Natural killer cell (primary cell): ENCODE measurements at regions of chr12 and their contacts with region 1.

Region 1: GRCh38 chr12:30695199-30696103 is at the start of gene IPO8:
- DNase-seq: peak; percentile 72 to 91
- ATAC-seq: peak; percentile 93 to 94 (median 93)
- H3K4me3 ChIP-seq: peak within 1 kb of the TSS; percentile 98
- H3K4me3 Mint-ChIP-seq: peak within 1 kb of the TSS; percentile 93
- H3K27ac ChIP-seq: peak within 1 kb of the TSS; percentile 70
- H3K27ac Mint-ChIP-seq: peak within 1 kb of the TSS; percentile 85 to 94
- H3K4me1 ChIP-seq: peaks cover 19% of the 10 kb centered on the region
- H3K4me1 Mint-ChIP-seq: peaks cover 33 to 38% of the 10 kb centered on the region in 2 donors
- H3K27me3 ChIP-seq: no peaks in the 10 kb centered on the region
- H3K27me3 Mint-ChIP-seq: peaks cover 0 to 2% of the 10 kb centered on the region in 2 donors
- CTCF ChIP-seq: peak; percentile 39
- total RNA-seq, gene IPO8: 42.6 to 54.8 (median 49.2) TPM

Region 2: GRCh38 chr12:29380536-29381523 is 1314.6 kb before region 1 on chr12 and contains the start of gene ERGIC2:
- intact Hi-C with region 1: loop called (anchors 1 kb)
- DNase-seq: peak; percentile 82 to 99
- ATAC-seq: peak; percentile 95 to 97 (median 95)
- H3K4me3 ChIP-seq: peak within 1 kb of the TSS; percentile 98
- H3K4me3 Mint-ChIP-seq: peak within 1 kb of the TSS; percentile 91
- H3K27ac ChIP-seq: peak within 1 kb of the TSS; percentile 97
- H3K27ac Mint-ChIP-seq: peak within 1 kb of the TSS; percentile 92 to 97
- H3K4me1 ChIP-seq: peaks cover 3% of the 10 kb centered on the region
- H3K4me1 Mint-ChIP-seq: peaks cover 36 to 39% of the 10 kb centered on the region in 2 donors
- H3K27me3 ChIP-seq: no peaks in the 10 kb centered on the region
- H3K27me3 Mint-ChIP-seq: peaks cover 3 to 20% of the 10 kb centered on the region in 2 donors
- CTCF ChIP-seq: no peak
- total RNA-seq, gene ERGIC2: 28.7 to 46.9 (median 37.2) TPM

Region 3: DNA sequence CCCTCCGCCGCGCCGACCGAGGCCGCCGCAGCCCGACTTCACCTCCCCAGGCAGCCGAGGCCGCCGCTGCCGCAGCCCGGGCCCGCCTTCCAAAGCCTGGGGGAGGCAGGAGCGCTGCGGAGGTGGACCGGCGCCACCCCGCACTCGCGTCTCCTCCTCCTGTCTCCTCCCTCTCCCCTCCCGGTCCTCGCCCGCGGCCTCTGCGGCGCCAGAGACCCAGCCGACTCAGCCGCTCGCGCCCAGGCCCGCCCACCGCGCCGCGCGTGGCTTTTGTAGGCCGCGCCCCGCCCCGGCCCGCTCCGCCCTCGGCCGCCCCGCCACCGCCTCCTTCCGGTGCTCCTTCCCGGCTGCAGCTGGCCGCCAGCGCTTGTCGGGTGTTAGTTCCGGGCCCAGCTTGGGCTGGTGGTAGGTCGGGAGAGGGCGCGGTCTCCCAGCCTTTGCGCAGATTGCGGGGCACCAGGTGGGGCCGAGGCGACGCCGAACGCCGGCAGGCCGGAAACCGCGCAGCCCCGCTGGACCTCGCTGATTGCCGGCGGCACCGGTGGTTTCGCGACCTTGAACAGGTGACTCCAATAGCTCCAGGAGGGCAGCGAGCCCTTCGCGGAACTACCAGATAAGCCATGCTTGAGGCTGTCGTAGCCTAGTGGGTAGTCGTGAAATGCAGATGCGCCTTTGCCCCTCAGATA is 59.4 kb after region 1 on chr12 and contains the start of gene CAPRIN2:
- intact Hi-C with region 1: loop called (anchors 1 kb)
- DNase-seq: peak; percentile 90 to 95
- ATAC-seq: peak; percentile 87 to 95 (median 89)
- H3K4me3 ChIP-seq: peak within 1 kb of the TSS; percentile 59
- H3K4me3 Mint-ChIP-seq: peak within 1 kb of the TSS; percentile 94
- H3K27ac ChIP-seq: peak within 1 kb of the TSS; percentile 74
- H3K27ac Mint-ChIP-seq: peak within 1 kb of the TSS; percentile 82 to 87
- H3K4me1 ChIP-seq: peaks cover 16% of the 10 kb centered on the region
- H3K4me1 Mint-ChIP-seq: peaks cover 23 to 43% of the 10 kb centered on the region in 2 donors
- H3K27me3 ChIP-seq: no peaks in the 10 kb centered on the region
- H3K27me3 Mint-ChIP-seq: no peaks in the 10 kb centered on the region
- CTCF ChIP-seq: no peak
- total RNA-seq, gene CAPRIN2: 38.1 to 53.2 (median 38.7) TPM

Region 4: GRCh38 chr12:30806989-30807694 is 111.7 kb after region 1 on chr12:
- intact Hi-C with region 1: loop called (anchors 1 kb)
- DNase-seq: peak in 1 of 2 donors; percentile 78
- ATAC-seq: peak in 2 of 3 donors; percentile 77 to 81
- H3K4me3 ChIP-seq: no peak overlapping the region
- H3K4me3 Mint-ChIP-seq: no peak overlapping the region
- H3K27ac ChIP-seq: no peak overlapping the region
- H3K27ac Mint-ChIP-seq: no peak overlapping the region
- H3K4me1 ChIP-seq: peaks cover 2% of the 10 kb centered on the region
- H3K4me1 Mint-ChIP-seq: no peaks in the 10 kb centered on the region
- H3K27me3 ChIP-seq: no peaks in the 10 kb centered on the region
- H3K27me3 Mint-ChIP-seq: peaks cover 8 to 9% of the 10 kb centered on the region in 2 donors
- CTCF ChIP-seq: peak; percentile 81

Region 5: GRCh38 chr12:31089072-31089471 is 393.6 kb after region 1 on chr12:
- intact Hi-C with region 1: no loop called
- DNase-seq: no peak
- ATAC-seq: no peak
- H3K4me3 ChIP-seq: no peak overlapping the region
- H3K4me3 Mint-ChIP-seq: no peak overlapping the region
- H3K27ac ChIP-seq: no peak overlapping the region
- H3K27ac Mint-ChIP-seq: no peak overlapping the region
- H3K4me1 ChIP-seq: no peaks in the 10 kb centered on the region
- H3K4me1 Mint-ChIP-seq: no peaks in the 10 kb centered on the region
- H3K27me3 ChIP-seq: no peaks in the 10 kb centered on the region
- H3K27me3 Mint-ChIP-seq: no peaks in the 10 kb centered on the region
- CTCF ChIP-seq: no peak